AG04449 (cell line): ENCODE measurements at regions of chr14 and their contacts with region 1.

Region 1: DNA sequence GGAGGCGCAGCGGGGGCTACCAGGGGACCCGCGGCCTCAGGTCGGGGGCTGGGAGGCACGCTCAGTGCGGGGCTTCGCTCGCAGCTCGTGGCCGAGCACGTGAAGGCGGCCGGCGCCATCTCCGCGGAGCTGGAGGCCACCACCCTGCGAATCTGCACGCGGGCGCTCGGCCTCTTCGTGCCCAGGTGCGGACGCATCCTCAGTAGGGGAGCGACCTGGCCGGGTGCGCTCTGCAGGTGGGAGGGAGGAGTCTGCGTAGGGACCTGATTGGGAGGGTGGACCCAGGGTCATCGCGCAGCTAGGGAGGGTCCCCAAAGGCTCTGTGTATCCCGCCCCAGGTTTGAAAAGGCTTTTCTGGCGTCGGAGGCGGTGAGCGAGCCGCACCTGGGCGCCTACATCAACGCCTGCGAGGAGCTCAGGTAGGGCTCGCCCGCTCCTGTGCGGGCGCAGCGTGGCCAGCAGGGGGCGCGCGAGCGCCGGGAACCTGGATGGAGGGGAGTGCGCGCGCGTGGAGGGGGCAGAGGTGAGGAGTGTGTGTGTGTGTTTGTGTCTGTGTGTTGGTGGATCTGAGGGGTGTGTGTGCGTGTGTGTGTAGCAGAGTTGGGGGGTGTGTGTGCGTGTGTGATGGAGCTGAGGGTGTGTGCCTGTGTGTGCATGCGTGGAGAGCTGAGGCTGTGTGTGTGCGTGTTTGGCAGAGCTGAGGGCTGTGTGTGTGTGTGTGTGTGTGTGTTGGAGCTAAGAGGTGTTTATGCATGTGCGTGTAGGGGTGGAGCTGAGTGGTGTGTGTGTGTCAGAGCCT is 10.3 kb downstream of the EXOC3L4 start:
- DNase-seq: no peak
- H3K4me3 ChIP-seq: no peak overlapping the region
- CTCF ChIP-seq: peak; percentile 97

Region 2: DNA sequence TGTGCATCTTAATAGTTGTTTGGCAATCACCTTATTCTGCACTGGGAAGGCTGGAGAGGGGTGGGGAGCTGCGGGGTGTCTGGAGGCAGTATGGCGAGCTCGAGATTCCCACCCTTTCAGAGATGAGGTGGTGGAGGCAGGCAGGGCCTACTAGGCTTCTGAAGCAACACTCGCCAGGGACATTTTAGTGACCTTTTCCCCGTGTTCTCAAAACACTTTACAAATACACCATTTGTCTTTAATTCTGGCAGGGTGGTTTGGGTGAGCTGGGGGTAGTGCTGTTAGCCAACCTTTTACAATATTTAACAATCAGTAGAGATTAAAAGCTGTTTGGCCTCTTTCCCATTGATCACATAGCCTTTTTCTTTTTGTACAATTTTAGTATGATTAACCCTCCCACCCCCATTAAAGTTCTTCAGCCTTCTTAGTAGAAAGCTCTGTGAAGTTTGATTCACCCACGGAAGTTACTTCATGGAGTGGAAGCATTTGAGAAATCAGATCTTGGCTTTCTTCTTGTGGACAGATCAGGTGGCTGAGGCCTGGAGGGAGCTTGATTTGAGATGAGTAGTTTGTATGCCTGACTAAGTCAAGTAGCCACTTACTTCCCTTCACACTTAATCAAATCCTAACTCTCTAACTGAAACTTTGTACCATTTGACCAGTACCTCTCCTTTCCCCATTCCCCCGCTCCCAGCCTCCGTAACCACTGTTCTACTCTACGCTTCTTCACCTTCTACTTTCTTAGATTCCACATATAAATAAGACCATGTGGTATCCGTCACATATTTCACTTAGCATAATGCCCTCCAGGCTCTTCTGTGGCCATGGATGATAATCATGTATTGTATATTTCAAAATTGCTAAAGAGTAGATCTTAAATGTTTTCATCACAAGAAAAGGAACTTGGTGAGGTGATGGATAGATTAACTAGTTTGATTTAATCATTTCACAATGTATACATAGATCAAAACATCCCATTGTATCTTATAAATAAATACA is 286.6 kb before region 1 on chr14:
- CTCF ChIA-PET with region 1: no interaction called
- POLR2A ChIA-PET with region 1: no interaction called
- DNase-seq: no peak
- H3K4me3 ChIP-seq: no peak overlapping the region
- CTCF ChIP-seq: no peak

Region 3: GRCh38 chr14:102857444-102857843 is 247.4 kb before region 1 on chr14:
- CTCF ChIA-PET with region 1: no interaction called
- POLR2A ChIA-PET with region 1: no interaction called
- DNase-seq: no peak
- H3K4me3 ChIP-seq: no peak overlapping the region
- CTCF ChIP-seq: no peak

Region 4: DNA sequence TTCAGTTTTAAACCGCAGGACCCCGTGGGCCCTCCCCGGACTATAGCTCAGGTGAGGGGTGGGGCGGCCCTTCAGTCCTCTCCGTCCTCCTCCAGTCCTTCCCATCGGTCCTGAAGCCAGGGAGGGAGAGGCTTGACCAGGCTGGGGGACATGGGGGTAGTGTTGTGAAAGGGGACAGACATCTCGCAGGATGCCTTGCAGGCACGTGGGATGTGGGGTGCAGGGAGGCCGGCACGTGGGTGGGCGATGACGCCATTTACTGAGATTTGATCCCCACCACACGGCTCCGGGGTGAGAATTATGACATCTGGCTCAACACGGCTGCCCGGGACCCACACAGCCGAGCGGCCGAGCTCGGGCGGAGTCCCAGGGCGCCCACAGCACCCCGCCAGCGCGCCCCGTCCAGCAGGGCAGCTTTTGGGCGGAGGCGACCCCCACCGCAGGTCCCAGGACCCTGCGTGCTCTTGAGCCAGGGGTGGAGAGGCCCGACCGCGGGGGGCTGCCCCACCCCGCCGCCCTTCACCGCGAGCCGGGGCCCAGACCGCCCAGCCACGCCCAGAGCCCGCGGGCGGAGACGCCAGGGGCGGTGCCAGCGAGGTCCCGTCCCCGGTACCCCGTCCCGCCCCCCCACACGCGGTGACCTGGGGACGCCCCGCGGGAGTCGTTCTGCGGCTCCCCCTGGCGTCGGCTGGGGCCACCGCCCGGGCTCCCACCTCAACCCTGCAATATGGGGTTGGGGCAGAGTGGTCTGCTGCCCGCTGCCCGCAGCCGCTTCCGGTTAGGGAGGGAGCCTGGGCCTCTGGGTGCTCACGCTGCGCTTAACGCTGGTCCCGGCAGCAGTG is 13.6 kb before region 1 on chr14:
- CTCF ChIA-PET with region 1: interaction called, 44 read pairs
- POLR2A ChIA-PET with region 1: no interaction called
- DNase-seq: no peak
- H3K4me3 ChIP-seq: peak overlapping the region; percentile 41
- CTCF ChIP-seq: peak; percentile 42

Region 5: DNA sequence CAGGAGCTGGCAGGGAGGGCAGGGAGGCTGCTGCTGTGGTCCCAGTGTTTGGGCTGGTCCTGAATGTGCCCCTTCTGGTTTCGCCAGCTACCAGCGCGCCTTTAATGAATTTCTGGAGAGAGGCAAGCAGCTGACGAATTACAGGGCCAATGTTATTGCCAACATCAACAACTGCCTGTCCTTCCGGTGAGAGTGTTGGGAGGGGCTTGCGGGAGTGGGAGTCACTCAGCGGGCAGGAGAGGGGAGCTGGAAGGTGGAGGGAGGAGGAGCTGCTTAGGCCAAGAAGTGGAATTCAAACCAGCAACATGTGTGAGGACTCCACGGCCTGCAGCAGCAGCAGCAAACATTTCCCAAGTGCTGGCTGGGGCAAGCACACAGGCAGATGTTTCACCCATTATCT is 26.1 kb after region 1 on chr14:
- CTCF ChIA-PET with region 1: interaction called, 50 read pairs
- POLR2A ChIA-PET with region 1: no interaction called
- DNase-seq: peak; percentile 24
- H3K4me3 ChIP-seq: no peak overlapping the region
- CTCF ChIP-seq: no peak

Region 6: GRCh38 chr14:103185051-103185992 is 80.5 kb after region 1 on chr14:
- CTCF ChIA-PET with region 1: interaction called, 154 read pairs
- POLR2A ChIA-PET with region 1: no interaction called
- DNase-seq: no peak
- H3K4me3 ChIP-seq: no peak overlapping the region
- CTCF ChIP-seq: peak; percentile 34

Region 7: DNA sequence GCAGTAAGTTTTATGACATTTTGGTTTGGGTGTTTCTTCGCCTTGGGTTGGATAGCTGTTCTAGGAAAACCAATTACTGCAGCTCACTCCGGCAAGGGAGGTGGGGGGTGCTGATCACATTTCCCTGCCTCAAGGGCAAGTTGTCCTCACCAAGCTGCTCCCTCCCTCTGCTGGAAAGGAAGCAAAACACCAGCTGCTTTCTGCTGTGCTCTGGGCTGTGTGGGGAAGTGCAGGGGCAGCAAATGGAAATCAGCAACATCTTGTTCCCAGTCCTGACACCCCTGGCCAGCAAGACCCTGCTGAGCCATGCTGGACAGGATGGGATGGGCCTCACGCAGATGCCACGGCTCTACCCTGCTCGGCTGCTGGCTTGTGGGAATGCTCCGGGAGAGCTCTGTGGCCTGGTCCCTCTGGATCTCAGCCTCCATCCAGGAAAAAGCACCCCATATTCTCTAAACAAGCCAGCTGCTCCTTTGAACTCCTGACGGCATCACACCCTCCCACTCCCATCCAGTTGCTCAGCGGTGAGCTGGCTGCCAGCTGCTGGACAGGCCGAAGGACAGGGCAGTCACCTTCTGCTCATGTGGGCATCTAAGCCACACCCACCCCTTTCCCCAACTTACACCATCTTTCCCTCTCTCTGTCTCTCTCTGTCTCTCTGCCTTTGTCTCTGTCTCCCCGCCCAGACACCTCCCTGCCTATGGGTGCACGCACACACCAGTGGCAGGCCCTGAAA is 176.8 kb after region 1 on chr14:
- CTCF ChIA-PET with region 1: interaction called, 20 read pairs
- POLR2A ChIA-PET with region 1: no interaction called
- DNase-seq: no peak
- H3K4me3 ChIP-seq: no peak overlapping the region
- CTCF ChIP-seq: peak; percentile 43